CD8-positive, alpha-beta T cell (primary cell): ENCODE measurements at regions of chr22 and their contacts with region 1.

Region 1: GRCh38 chr22:20130739-20131596 is 636 bp upstream of the ZDHHC8 start:
- DNase-seq: peak; percentile 46 to 89 (median 81)
- ATAC-seq: peak; percentile 76
- H3K4me3 ChIP-seq: peak overlapping the region; percentile 68 to 73
- H3K4me3 Mint-ChIP-seq: peak overlapping the region; percentile 61
- H3K27ac ChIP-seq: peak overlapping the region; percentile 58 to 64
- H3K27ac Mint-ChIP-seq: peak overlapping the region; percentile 60
- H3K4me1 ChIP-seq: peaks cover 42% of the 10 kb centered on the region
- H3K4me1 Mint-ChIP-seq: peaks cover 29% of the 10 kb centered on the region
- H3K27me3 ChIP-seq: no peaks in the 10 kb centered on the region
- H3K27me3 Mint-ChIP-seq: no peaks in the 10 kb centered on the region
- CTCF ChIP-seq: no peak

Region 2: DNA sequence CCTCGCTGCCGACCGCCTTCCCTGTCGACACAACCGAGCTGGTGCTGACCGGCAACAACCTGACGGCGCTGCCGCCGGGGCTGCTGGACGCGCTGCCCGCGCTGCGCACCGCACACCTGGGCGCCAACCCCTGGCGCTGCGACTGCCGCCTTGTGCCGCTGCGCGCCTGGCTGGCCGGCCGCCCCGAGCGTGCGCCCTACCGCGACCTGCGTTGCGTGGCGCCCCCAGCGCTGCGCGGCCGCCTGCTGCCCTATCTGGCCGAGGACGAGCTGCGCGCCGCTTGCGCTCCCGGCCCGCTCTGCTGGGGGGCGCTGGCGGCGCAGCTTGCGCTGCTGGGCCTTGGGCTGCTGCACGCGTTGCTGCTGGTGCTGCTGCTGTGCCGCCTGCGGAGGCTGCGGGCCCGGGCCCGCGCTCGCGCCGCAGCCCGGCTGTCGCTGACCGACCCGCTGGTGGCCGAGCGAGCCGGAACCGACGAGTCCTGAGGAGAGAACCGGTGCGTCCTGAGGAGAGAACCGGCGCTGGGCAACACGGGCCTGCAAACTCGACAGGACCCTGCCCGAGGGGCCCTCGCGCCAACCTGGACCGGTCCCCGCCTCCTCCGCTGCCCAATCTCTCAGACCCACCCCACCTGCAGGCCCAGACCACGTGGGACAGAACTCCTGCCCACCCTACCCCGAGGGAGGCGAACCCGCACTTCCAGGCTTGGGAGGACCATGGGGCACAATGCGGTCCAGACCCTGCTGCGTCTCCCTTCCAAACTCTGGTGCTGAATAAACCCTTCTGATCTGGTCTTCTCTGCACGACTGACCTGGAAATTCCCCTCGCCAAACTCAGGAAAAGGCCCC is 406.8 kb before region 1 on chr22:
- CTCF ChIA-PET with region 1: no interaction called
- POLR2A ChIA-PET with region 1: no interaction called
- intact Hi-C with region 1: loop called in 1 of 2 experiments (anchors 10 kb)
- DNase-seq: peak in 3 of 9 experiments; percentile 31 to 54 (median 42)
- ATAC-seq: peak; percentile 74
- H3K4me3 ChIP-seq: no peak overlapping the region
- H3K4me3 Mint-ChIP-seq: peak overlapping the region; percentile 50
- H3K27ac ChIP-seq: no peak overlapping the region
- H3K27ac Mint-ChIP-seq: no peak overlapping the region
- H3K4me1 ChIP-seq: peaks cover 12% of the 10 kb centered on the region
- H3K4me1 Mint-ChIP-seq: peaks cover 9% of the 10 kb centered on the region
- H3K27me3 ChIP-seq: peaks cover 8 to 19% of the 10 kb centered on the region in 2 experiments
- H3K27me3 Mint-ChIP-seq: peaks cover 40% of the 10 kb centered on the region
- CTCF ChIP-seq: peak; percentile 24

Region 3: DNA sequence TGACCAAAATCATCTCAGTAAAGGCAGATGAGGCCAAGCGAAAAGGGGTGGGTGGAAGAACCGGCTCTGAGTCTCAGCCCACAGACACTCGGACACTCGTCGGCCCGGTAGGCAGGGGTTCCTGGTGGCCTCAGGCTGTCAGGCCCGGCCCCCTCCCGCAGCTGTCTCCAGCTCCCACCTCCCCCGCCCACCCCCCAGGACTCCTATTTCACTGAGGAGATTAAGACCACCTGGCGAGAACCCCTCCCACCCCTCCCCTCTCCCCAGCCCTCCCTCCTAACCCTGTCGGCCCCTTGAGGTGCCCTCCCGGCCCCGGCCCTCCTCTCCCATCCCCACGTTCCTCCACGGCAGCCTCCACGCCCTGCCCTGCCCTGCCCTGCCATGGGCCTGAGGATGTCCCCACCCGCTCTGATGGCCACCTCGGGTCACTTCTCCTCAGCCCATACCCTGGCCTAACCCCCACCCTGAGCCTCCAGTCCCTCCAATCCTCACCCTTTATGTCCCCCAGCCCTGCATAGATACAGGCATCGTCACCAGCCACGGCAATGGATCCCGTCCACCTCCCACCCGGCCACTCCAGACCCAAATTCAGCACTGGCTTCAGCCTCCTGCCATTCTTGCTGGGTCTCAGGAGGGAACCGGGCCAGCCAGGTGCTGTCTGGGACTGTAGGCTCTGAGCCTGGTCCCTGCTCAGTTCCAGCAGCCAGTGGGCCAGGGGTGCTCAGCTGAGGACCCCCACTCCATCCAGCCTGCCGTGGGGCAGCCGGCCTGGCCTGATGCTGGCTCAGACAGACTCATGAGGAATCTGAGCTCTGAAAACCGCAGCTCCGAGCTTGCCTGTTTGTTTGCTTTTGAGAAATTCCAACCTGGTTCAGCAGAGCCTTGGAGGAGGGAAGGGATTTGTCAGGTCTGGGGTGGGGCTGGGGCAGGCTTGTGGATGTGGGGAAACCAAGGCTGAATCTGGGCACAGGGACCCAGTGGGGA is 380.2 kb before region 1 on chr22:
- CTCF ChIA-PET with region 1: no interaction called
- POLR2A ChIA-PET with region 1: no interaction called
- intact Hi-C with region 1: no loop called
- DNase-seq: no peak
- ATAC-seq: no peak
- H3K4me3 ChIP-seq: no peak overlapping the region
- H3K4me3 Mint-ChIP-seq: no peak overlapping the region
- H3K27ac ChIP-seq: no peak overlapping the region
- H3K27ac Mint-ChIP-seq: no peak overlapping the region
- H3K4me1 ChIP-seq: peaks cover 7% of the 10 kb centered on the region
- H3K4me1 Mint-ChIP-seq: peaks cover 3% of the 10 kb centered on the region
- H3K27me3 ChIP-seq: peaks cover 11 to 16% of the 10 kb centered on the region in 2 experiments
- H3K27me3 Mint-ChIP-seq: peaks cover 19% of the 10 kb centered on the region
- CTCF ChIP-seq: no peak

Region 4: GRCh38 chr22:19970479-19971275 is 160.3 kb before region 1 on chr22:
- CTCF ChIA-PET with region 1: interaction called, 21 read pairs
- POLR2A ChIA-PET with region 1: interaction called, 3 read pairs
- intact Hi-C with region 1: loop called in 1 of 2 experiments (anchors 1 kb)
- DNase-seq: peak; percentile 66 to 89 (median 81)
- ATAC-seq: peak; percentile 88
- H3K4me3 ChIP-seq: no peak overlapping the region
- H3K4me3 Mint-ChIP-seq: no peak overlapping the region
- H3K27ac ChIP-seq: peak overlapping the region in 1 of 2 experiments; percentile 60
- H3K27ac Mint-ChIP-seq: no peak overlapping the region
- H3K4me1 ChIP-seq: peaks cover 16% of the 10 kb centered on the region
- H3K4me1 Mint-ChIP-seq: peaks cover 16% of the 10 kb centered on the region
- H3K27me3 ChIP-seq: no peaks in the 10 kb centered on the region
- H3K27me3 Mint-ChIP-seq: no peaks in the 10 kb centered on the region
- CTCF ChIP-seq: peak; percentile 85

Region 5: GRCh38 chr22:20016734-20017621 is 114.0 kb before region 1 on chr22 and contains the start of gene ARVCF:
- CTCF ChIA-PET with region 1: interaction called, 8 read pairs
- POLR2A ChIA-PET with region 1: no interaction called
- intact Hi-C with region 1: loop called (anchors 1 kb)
- DNase-seq: peak; percentile 85 to 96 (median 92)
- ATAC-seq: peak; percentile 66
- H3K4me3 ChIP-seq: peak within 1 kb of the TSS; percentile 79 to 81
- H3K4me3 Mint-ChIP-seq: peak within 1 kb of the TSS; percentile 91
- H3K27ac ChIP-seq: no peak within 1 kb of the TSS
- H3K27ac Mint-ChIP-seq: peak within 1 kb of the TSS; percentile 14
- H3K4me1 ChIP-seq: peaks cover 19% of the 10 kb centered on the region
- H3K4me1 Mint-ChIP-seq: peaks cover 25% of the 10 kb centered on the region
- H3K27me3 ChIP-seq: no peaks in the 10 kb centered on the region
- H3K27me3 Mint-ChIP-seq: no peaks in the 10 kb centered on the region
- CTCF ChIP-seq: no peak
- total RNA-seq, gene ARVCF: 1.1 to 2.3 TPM

Region 6: GRCh38 chr22:20116951-20117645 is 13.9 kb before region 1 on chr22 and contains the start of gene TRMT2A:
- CTCF ChIA-PET with region 1: interaction called, 13 read pairs
- POLR2A ChIA-PET with region 1: interaction called, 17 read pairs
- intact Hi-C with region 1: loop called (anchors 1 kb)
- DNase-seq: peak; percentile 91 to 99 (median 96)
- ATAC-seq: peak; percentile 80
- H3K4me3 ChIP-seq: peak within 1 kb of the TSS; percentile 80 to 96
- H3K4me3 Mint-ChIP-seq: peak within 1 kb of the TSS; percentile 90
- H3K27ac ChIP-seq: peak within 1 kb of the TSS; percentile 81 to 94
- H3K27ac Mint-ChIP-seq: peak within 1 kb of the TSS; percentile 93
- H3K4me1 ChIP-seq: peaks cover 38% of the 10 kb centered on the region
- H3K4me1 Mint-ChIP-seq: peaks cover 43% of the 10 kb centered on the region
- H3K27me3 ChIP-seq: no peaks in the 10 kb centered on the region
- H3K27me3 Mint-ChIP-seq: no peaks in the 10 kb centered on the region
- CTCF ChIP-seq: no peak
- total RNA-seq, gene TRMT2A: 57.8 to 62.8 TPM

Region 7: GRCh38 chr22:20153945-20154344 is 23.0 kb after region 1 on chr22:
- CTCF ChIA-PET with region 1: no interaction called
- POLR2A ChIA-PET with region 1: no interaction called
- intact Hi-C with region 1: no loop called
- DNase-seq: no peak
- ATAC-seq: no peak
- H3K4me3 ChIP-seq: no peak overlapping the region
- H3K4me3 Mint-ChIP-seq: no peak overlapping the region
- H3K27ac ChIP-seq: no peak overlapping the region
- H3K27ac Mint-ChIP-seq: no peak overlapping the region
- H3K4me1 ChIP-seq: no peaks in the 10 kb centered on the region
- H3K4me1 Mint-ChIP-seq: peaks cover 4% of the 10 kb centered on the region
- H3K27me3 ChIP-seq: peaks cover 0 to 4% of the 10 kb centered on the region in 2 experiments
- H3K27me3 Mint-ChIP-seq: peaks cover 2% of the 10 kb centered on the region
- CTCF ChIP-seq: no peak